Posterior cingulate gyrus (tissue), 11 donors: ENCODE measurements at regions of chr9 and their contacts with region 1.

Region 1: DNA sequence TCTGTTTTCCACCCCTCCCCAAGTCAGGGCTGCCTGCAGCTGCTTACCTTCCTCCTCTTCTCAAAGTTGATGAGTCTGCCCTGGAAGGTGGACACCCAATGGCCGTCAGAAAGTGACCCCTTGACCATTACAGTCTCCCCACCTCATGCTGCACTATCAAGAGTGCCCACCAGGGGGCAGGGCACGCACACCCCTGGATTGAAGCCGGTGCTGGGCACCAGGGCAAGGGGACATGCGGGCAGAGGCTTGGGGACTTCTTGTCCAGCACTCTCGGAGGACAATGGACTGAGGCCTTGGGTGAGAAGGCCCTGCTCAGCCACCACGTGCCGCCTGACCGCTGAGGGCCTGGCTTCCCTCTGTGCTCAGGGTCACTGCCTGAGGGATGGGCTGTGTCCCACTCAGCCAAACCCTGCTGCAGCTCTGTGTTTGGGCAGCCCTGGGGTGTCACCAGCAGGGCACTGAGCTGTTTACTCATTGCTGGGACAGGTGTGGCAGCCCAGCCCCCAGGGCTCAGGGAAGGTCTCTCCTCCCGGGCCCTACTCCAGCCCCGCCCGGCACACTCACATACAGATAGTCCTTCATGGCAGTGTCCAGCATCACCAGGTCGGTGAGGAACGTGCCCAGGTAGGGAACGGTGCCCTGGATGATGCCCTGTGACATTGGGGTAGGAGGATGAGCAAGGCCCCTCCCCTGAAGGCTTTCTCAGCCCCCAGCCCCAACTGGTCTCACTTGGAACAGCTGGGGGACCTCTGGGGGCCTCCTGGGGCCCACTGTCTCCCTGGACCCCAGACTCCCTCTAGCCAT is 17.7 kb downstream of the RALGDS start:
- DNase-seq: peak in 9 of 10 donors; percentile 53 to 96 (median 78)

Region 2: DNA sequence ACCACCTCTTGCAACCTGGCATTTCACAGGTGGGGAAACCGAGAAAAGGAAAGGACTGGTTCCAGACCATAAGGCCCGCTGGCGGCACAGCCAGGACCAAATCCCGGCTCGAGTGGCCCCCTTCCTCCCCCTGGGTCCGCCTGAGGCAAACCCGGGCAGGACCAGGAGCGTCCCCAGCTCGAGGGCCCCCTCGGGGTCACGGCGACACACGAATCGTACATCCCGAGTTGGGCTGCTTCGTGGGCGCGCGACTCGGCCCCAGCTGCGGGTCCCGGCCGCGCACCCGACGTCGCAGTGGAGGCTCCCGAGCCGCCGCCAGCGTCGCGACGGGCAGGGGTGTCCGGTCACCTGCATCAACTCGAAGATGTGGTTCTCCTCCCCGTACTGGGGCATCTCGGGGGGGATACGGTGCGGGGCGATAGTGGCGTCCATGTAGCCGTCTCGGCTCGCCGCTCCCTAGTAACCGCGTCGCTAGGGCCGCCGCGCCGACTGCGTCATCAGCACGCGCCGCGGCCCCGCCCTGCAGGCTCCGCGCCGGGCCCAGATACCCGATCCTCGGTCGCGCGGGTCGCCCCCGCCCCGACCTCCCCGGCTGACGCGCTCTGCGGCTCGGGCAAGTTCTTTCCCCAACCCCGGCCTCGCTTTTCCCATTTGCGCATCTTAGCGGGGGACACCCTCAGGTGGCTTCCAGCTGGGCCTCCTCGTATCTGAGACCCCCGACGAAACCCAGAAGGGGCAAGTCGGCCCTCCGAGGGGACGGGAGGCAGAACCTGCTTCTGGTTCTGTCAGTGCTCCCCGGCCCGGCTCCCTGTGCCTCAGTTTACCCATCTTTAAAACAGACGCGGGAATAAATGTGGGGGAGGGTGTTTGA is 225.3 kb before region 1 on chr9 and contains the start of gene AK8:
- intact Hi-C with region 1: no loop called
- DNase-seq: peak; percentile 42 to 96 (median 64)

Region 3: GRCh38 chr9:133048569-133048968 is 54.8 kb before region 1 on chr9:
- intact Hi-C with region 1: loop called (anchors 5 kb)
- DNase-seq: peak in 8 of 10 donors; percentile 35 to 92 (median 64)

Region 4: GRCh38 chr9:133144137-133144903 is 40.9 kb after region 1 on chr9:
- intact Hi-C with region 1: loop called (anchors 1 kb)
- DNase-seq: peak; percentile 58 to 97 (median 80)